Heart right ventricle (tissue), 16 donors: ENCODE measurements at regions of chr5 and their contacts with region 1.

Region 1: GRCh38 chr5:170225326-170226128 is 7.3 kb upstream of the C5orf58 start:
- DNase-seq: peak; percentile 58 to 83
- ATAC-seq: peak; percentile 35 to 78 (median 71)
- H3K4me3 ChIP-seq: no peak overlapping the region
- H3K27ac ChIP-seq: no peak overlapping the region
- H3K4me1 ChIP-seq: peaks cover 0 to 28% (median 7%) of the 10 kb centered on the region in 9 donors
- H3K27me3 ChIP-seq: no peaks in the 10 kb centered on the region
- CTCF ChIP-seq: peak; percentile 55 to 87 (median 78)

Region 2: GRCh38 chr5:170173235-170173634 is 52.3 kb before region 1 on chr5:
- intact Hi-C with region 1: no loop called
- DNase-seq: no peak
- ATAC-seq: no peak
- H3K4me3 ChIP-seq: no peak overlapping the region
- H3K27ac ChIP-seq: no peak overlapping the region
- H3K4me1 ChIP-seq: no peaks in the 10 kb centered on the region
- H3K27me3 ChIP-seq: no peaks in the 10 kb centered on the region
- CTCF ChIP-seq: no peak

Region 3: DNA sequence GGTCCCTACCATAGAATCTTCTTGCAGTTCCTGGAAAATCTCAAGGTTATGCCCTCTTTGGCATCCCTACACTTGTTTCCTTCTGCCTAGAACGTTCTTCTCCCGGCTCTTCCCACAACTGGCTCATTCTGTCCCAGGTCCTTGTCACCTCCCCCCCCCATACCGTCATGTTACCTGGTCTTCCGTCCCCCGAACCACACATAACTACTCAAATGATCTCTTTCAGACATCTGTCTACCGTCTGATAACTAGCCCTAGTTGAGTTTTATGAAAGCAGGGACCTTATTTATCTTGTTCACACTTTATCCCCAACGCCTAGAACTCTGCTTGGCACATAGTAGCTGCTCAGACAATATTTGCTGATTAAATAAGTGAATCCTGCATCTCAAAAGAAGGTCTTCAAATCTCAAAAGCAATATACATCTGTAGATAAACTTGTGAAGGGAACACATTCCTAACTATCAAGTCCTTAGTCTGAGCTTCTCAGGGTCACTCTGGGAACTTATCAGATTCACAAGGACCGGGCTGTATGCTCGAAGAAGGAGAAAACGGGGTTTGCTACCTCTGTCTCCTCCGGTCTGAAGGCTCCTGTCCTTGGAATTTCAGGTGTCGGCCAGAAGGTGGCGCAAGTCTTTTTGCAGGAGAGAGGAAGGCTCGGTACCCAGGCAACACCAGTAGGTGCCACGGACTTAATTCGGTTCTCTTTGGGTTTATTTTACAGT is 42.1 kb after region 1 on chr5:
- intact Hi-C with region 1: loop called in 2 of 10 experiments (anchors 5 kb)
- DNase-seq: peak; percentile 72 to 80
- ATAC-seq: peak; percentile 61 to 81 (median 74)
- H3K4me3 ChIP-seq: peak overlapping the region in 2 of 10 donors; percentile 17 to 18
- H3K27ac ChIP-seq: peak overlapping the region in 3 of 10 donors; percentile 8 to 88 (median 16)
- H3K4me1 ChIP-seq: peaks cover 0 to 81% (median 13%) of the 10 kb centered on the region in 9 donors
- H3K27me3 ChIP-seq: peaks cover 0 to 16% (median 0%) of the 10 kb centered on the region in 7 donors
- CTCF ChIP-seq: peak; percentile 78 to 90 (median 85)

Region 4: DNA sequence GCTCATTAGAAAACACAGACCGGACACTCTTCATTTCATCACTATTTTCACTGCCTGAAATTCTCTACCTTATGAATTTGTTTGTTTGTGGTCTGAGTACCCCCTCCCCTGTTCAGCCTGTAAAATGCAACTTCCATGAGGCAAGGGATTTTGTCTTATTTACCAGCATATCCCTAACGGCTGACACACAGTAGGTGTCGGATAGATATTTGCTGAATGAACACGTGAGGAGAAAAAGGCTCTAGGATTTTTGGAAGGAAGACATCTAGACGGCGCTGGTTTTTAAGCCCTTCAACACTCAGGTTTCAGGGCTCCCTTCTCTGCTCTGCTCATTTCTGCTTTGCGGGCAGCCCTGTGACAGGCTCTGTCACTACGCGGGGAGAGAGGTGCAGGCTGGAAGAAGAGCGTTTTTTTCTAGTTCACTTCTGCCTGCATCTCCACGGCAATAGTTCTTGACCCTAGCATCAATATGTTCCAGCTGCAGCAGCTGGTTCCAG is 122.7 kb after region 1 on chr5:
- intact Hi-C with region 1: loop called in 5 of 10 experiments (anchors 5 to 10 kb)
- DNase-seq: no peak
- ATAC-seq: peak in 6 of 8 donors; percentile 22 to 68 (median 50)
- H3K4me3 ChIP-seq: no peak overlapping the region
- H3K27ac ChIP-seq: peak overlapping the region in 3 of 10 donors; percentile 6 to 43 (median 21)
- H3K4me1 ChIP-seq: peaks cover 0 to 22% (median 9%) of the 10 kb centered on the region in 9 donors
- H3K27me3 ChIP-seq: peaks cover 0 to 45% (median 20%) of the 10 kb centered on the region in 7 donors
- CTCF ChIP-seq: peak in 8 of 9 donors; percentile 7 to 56 (median 35)

Region 5: GRCh38 chr5:170420780-170421412 is 195.4 kb after region 1 on chr5:
- intact Hi-C with region 1: loop called (anchors 1 to 5 kb)
- DNase-seq: peak in 1 of 2 donors; percentile 75
- ATAC-seq: peak; percentile 62 to 75 (median 71)
- H3K4me3 ChIP-seq: no peak overlapping the region
- H3K27ac ChIP-seq: peak overlapping the region in 1 of 10 donors; percentile 6
- H3K4me1 ChIP-seq: peaks cover 0 to 32% (median 18%) of the 10 kb centered on the region in 9 donors
- H3K27me3 ChIP-seq: peaks cover 0 to 10% (median 0%) of the 10 kb centered on the region in 7 donors
- CTCF ChIP-seq: peak; percentile 64 to 89 (median 81)

Region 6: GRCh38 chr5:170633235-170634081 is 407.9 kb after region 1 on chr5:
- intact Hi-C with region 1: loop called in 5 of 10 experiments (anchors 5 to 10 kb)
- DNase-seq: peak; percentile 39 to 80
- ATAC-seq: peak; percentile 66 to 84 (median 80)
- H3K4me3 ChIP-seq: peak overlapping the region in 9 of 10 donors; percentile 18 to 47 (median 34)
- H3K27ac ChIP-seq: peak overlapping the region; percentile 40 to 83 (median 72)
- H3K4me1 ChIP-seq: peaks cover 2 to 44% (median 30%) of the 10 kb centered on the region in 9 donors
- H3K27me3 ChIP-seq: no peaks in the 10 kb centered on the region
- CTCF ChIP-seq: peak in 3 of 9 donors; percentile 4 to 26 (median 13)